Breast epithelium (tissue), 4 donors: ENCODE measurements at regions of chr16 and their contacts with region 1.

Region 1: GRCh38 chr16:80176114-80176513 is 364.7 kb upstream of the DYNLRB2 start:
- DNase-seq: no peak
- H3K4me3 ChIP-seq: no peak overlapping the region
- H3K27ac ChIP-seq: no peak overlapping the region
- H3K4me1 ChIP-seq: no peaks in the 10 kb centered on the region
- H3K27me3 ChIP-seq: no peaks in the 10 kb centered on the region
- CTCF ChIP-seq: no peak
- POLR2A ChIP-seq: no peak

Region 2: GRCh38 chr16:79320956-79321355 is 855.2 kb before region 1 on chr16:
- intact Hi-C with region 1: loop called (anchors 5 kb)
- DNase-seq: no peak
- H3K4me3 ChIP-seq: no peak overlapping the region
- H3K27ac ChIP-seq: no peak overlapping the region
- H3K4me1 ChIP-seq: no peaks in the 10 kb centered on the region
- H3K27me3 ChIP-seq: no peaks in the 10 kb centered on the region
- CTCF ChIP-seq: no peak
- POLR2A ChIP-seq: no peak